Activated CD4-positive, alpha-beta T cell treated with anti-CD3 and anti-CD28 coated beads, Interleukin-2, amount 10 ng/mL, durations not matched to agents 24 days and 14 days (primary cell): ENCODE measurements at regions of chr3 and their contacts with region 1.

Region 1: GRCh38 chr3:10192953-10193691 is 28.4 kb downstream of the IRAK2 start:
- DNase-seq: peak; percentile 86
- H3K4me3 Mint-ChIP-seq: peak overlapping the region; percentile 63
- H3K27ac Mint-ChIP-seq: peak overlapping the region; percentile 92
- H3K4me1 Mint-ChIP-seq: peaks cover 74% of the 10 kb centered on the region
- H3K27me3 Mint-ChIP-seq: no peaks in the 10 kb centered on the region

Region 2: DNA sequence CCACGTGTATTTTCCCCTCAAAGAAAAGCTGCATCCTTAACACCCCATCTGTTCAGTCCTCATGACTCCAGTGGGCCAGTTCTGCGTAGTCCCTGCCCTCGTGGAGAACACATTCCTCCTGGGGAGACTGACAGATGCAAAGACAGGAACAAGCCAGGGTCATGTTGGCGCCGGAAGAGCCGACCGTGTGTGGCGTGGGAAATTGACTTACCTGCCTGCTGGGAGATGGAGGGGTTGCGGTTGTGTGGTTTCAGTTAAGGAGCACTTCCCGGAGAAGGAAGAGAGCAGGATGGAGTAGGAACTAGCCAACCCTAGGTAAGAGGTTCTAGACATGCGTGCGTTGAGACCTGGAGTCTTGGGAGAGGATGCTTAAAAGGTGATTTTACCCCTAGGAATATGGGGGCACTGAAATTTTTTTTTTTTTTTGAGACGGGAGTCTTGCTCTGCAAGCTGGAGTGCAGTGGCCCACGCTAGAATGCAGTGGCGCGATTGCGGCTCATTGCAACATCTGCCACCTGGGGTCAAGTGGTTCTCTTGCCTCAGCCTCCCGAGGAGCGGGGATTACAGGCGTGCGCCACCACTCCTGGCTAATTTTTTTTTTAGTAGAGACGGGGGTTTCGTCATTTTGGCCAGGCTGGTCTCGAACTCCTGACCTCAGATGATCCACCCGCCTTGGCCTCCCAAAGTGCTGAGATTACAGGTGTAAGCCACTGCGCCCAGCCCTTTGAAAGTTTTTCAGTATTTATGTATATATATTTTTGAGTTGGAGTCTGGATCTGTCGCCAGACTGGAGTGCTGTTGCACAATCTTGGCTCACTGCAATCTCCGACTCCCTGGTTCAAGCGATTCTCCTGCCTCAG is 50.2 kb before region 1 on chr3:
- intact Hi-C with region 1: loop called (anchors 2 kb)
- DNase-seq: peak; percentile 72
- H3K4me3 Mint-ChIP-seq: peak overlapping the region; percentile 96
- H3K27ac Mint-ChIP-seq: peak overlapping the region; percentile 88
- H3K4me1 Mint-ChIP-seq: peaks cover 26% of the 10 kb centered on the region
- H3K27me3 Mint-ChIP-seq: no peaks in the 10 kb centered on the region

Region 3: DNA sequence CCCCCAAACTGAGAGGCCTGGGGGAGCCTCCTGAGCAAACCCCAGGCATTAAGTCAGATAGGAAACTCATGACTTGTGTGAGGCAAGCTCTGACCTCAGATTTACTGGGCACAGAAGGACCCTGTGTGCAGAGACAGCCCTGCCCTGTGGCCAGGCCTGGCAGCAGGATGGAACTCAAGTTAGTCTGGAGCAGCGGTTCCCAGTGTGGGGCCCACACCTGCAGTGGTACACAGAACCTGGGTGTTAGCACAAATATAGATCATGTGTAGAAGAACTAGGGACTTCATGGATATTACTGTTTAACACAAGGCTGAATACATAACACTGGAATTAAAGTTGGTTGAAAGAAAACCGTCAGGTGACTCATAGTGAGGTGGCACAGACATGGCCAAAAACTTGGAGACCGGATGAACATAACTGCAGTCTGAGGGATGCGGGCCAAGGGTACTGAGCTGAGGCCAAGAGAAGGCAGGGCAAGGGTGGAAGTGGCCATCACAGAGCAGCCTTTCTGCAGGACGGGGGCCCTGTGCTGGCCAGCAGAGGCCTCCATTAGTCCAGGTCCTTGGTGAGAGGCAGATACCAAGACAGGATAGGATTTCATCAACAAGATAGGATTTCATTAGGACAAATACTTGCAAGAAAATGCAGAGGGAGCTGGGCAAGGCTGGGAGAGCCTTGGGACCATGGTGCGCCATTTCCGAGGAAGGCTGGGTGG is 12.5 kb after region 1 on chr3:
- intact Hi-C with region 1: loop called (anchors 2 kb)
- DNase-seq: no peak
- H3K4me3 Mint-ChIP-seq: no peak overlapping the region
- H3K27ac Mint-ChIP-seq: peak overlapping the region; percentile 19
- H3K4me1 Mint-ChIP-seq: peaks cover 32% of the 10 kb centered on the region
- H3K27me3 Mint-ChIP-seq: no peaks in the 10 kb centered on the region

Region 4: GRCh38 chr3:10219737-10220136 is 26.6 kb after region 1 on chr3:
- intact Hi-C with region 1: no loop called
- DNase-seq: no peak
- H3K4me3 Mint-ChIP-seq: no peak overlapping the region
- H3K27ac Mint-ChIP-seq: peak overlapping the region; percentile 7
- H3K4me1 Mint-ChIP-seq: peaks cover 48% of the 10 kb centered on the region
- H3K27me3 Mint-ChIP-seq: no peaks in the 10 kb centered on the region

Region 5: DNA sequence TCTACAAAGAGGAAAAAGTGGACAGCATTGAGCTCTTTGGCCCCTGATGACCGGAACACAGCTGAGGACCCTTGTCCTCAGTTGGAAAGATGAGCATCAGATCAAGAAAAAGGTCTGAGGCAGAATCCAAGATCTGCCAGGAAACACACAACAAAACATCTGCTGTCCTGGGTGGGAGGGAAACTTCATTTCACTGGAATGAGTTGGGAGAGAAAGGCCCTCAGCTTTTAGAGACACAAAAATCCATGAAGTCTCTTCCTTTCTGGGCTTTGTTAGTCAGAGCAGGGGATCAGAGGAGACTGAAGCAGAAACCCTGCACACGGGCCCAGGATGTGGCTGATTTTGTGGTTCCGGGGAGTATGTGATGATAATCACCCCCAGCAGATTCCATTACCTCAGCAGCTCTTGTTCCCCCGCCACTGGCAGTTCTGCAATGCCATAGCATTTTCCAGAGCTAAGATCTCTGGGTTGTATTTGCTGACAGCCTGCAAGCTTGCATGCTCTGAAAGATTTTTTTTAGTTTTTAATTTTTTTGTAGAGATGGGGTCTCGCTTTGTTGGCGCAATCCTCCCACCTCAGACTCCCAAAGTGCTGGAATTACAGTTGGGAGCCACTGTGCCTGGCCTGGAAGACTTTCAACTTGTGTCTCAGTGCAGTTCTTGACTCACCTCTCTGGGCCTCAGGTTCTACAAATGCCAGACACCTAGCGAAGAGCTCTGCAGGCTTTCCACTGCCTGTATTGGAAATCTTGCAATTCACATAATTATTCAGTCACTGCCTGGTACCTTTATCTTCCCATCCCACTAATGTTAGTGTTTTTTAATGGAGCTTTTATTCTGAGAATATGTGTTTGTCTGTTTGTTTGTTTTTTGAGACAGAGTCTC is 49.3 kb after region 1 on chr3:
- intact Hi-C with region 1: loop called (anchors 1 kb)
- DNase-seq: peak; percentile 95
- H3K4me3 Mint-ChIP-seq: peak overlapping the region; percentile 79
- H3K27ac Mint-ChIP-seq: peak overlapping the region; percentile 98
- H3K4me1 Mint-ChIP-seq: peaks cover 50% of the 10 kb centered on the region
- H3K27me3 Mint-ChIP-seq: no peaks in the 10 kb centered on the region

Region 6: DNA sequence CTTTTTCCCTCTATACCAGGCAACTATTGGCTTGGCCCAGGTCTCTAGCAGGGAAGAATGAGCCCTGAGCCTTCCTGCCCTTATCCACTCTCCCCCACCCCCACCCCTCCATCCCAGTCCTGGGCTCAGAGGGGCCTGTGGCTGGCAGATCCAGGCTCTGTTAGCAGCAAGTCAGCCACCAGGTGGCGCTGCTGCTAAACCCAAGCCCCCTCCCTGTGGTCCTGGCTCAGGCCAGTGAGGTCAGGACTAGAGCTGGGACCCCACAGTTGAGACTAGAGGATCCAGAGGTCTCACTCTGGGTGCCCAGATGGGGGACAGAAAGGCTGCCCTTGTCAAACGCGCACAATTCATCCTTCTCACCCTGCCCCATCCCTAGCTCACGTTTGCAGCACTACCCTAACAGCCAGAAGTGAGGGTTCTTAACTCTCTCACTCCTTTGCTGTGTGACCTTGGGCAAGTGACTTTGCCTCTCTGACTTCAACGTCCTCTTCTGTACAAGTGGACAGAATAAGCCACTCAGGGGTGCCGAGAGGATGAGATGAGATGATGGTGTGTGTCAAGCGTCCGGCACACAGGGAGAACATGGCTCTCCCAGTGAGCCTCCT is 752.7 kb after region 1 on chr3:
- intact Hi-C with region 1: no loop called
- DNase-seq: peak; percentile 85
- H3K4me3 Mint-ChIP-seq: no peak overlapping the region
- H3K27ac Mint-ChIP-seq: no peak overlapping the region
- H3K4me1 Mint-ChIP-seq: no peaks in the 10 kb centered on the region
- H3K27me3 Mint-ChIP-seq: peaks cover 2% of the 10 kb centered on the region